Activated CD4-positive, alpha-beta T cell treated with anti-CD3 and anti-CD28 coated beads, Interleukin-2, amount 10 ng/mL, durations not matched to agents 24 days and 14 days (primary cell): ENCODE measurements at regions of chr21 and their contacts with region 1.

Region 1: DNA sequence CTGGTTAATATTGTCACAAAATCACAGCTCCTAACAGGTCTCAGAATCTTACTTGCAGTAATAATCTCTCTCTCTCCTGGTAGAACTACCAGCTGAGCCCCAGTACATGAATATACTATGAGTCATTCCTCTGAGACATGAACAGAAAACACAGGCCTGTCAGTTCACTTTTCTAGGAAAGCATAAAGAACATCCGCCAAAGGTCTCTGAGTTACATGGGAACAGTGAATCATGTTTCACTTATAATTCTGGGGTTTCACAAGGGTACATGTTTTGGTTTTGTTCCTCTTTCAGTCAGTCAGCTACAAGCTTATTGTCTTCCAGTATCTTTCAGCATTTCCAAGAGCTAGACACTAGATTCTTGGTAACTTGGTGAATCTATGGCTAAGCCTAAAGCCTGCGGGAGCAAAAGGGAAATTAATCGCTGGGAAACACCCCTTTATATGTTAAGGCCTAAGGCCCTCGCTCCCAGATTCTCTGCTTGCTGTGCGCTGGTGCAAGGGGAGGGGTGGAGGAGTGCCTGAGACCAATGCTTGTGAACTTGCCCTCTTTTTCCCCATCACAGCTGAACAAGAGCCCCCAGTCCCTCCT is 31.7 kb downstream of the IFNGR2 start:
- DNase-seq: peak; percentile 81
- H3K4me3 Mint-ChIP-seq: peak overlapping the region; percentile 71
- H3K27ac Mint-ChIP-seq: peak overlapping the region; percentile 86
- H3K4me1 Mint-ChIP-seq: peaks cover 24% of the 10 kb centered on the region
- H3K27me3 Mint-ChIP-seq: no peaks in the 10 kb centered on the region

Region 2: GRCh38 chr21:33229784-33230544 is 204.9 kb before region 1 on chr21 and contains the start of gene IFNAR2:
- intact Hi-C with region 1: loop called (anchors 1 kb)
- DNase-seq: peak; percentile 93
- H3K4me3 Mint-ChIP-seq: peak within 1 kb of the TSS; percentile 84
- H3K27ac Mint-ChIP-seq: peak within 1 kb of the TSS; percentile 89
- H3K4me1 Mint-ChIP-seq: peaks cover 43% of the 10 kb centered on the region
- H3K27me3 Mint-ChIP-seq: peaks cover 2% of the 10 kb centered on the region
- total RNA-seq, gene IFNAR2: 35.2 and 36.7 TPM in 2 replicates

Region 3: GRCh38 chr21:33406493-33406892 is 28.4 kb before region 1 on chr21:
- intact Hi-C with region 1: loop called (anchors 1 kb)
- DNase-seq: no peak
- H3K4me3 Mint-ChIP-seq: peak overlapping the region; percentile 23
- H3K27ac Mint-ChIP-seq: no peak overlapping the region
- H3K4me1 Mint-ChIP-seq: peaks cover 31% of the 10 kb centered on the region
- H3K27me3 Mint-ChIP-seq: peaks cover 34% of the 10 kb centered on the region

Region 4: GRCh38 chr21:33552093-33552998 is 117.5 kb after region 1 on chr21:
- intact Hi-C with region 1: no loop called
- DNase-seq: no peak
- H3K4me3 Mint-ChIP-seq: no peak overlapping the region
- H3K27ac Mint-ChIP-seq: no peak overlapping the region
- H3K4me1 Mint-ChIP-seq: peaks cover 36% of the 10 kb centered on the region
- H3K27me3 Mint-ChIP-seq: no peaks in the 10 kb centered on the region

Region 5: GRCh38 chr21:33598051-33598450 is 163.2 kb after region 1 on chr21:
- intact Hi-C with region 1: no loop called
- DNase-seq: no peak
- H3K4me3 Mint-ChIP-seq: no peak overlapping the region
- H3K27ac Mint-ChIP-seq: no peak overlapping the region
- H3K4me1 Mint-ChIP-seq: no peaks in the 10 kb centered on the region
- H3K27me3 Mint-ChIP-seq: no peaks in the 10 kb centered on the region